Common myeloid progenitor, CD34-positive (primary cell): ENCODE measurements at regions of chr19 and their contacts with region 1.

Region 1: DNA sequence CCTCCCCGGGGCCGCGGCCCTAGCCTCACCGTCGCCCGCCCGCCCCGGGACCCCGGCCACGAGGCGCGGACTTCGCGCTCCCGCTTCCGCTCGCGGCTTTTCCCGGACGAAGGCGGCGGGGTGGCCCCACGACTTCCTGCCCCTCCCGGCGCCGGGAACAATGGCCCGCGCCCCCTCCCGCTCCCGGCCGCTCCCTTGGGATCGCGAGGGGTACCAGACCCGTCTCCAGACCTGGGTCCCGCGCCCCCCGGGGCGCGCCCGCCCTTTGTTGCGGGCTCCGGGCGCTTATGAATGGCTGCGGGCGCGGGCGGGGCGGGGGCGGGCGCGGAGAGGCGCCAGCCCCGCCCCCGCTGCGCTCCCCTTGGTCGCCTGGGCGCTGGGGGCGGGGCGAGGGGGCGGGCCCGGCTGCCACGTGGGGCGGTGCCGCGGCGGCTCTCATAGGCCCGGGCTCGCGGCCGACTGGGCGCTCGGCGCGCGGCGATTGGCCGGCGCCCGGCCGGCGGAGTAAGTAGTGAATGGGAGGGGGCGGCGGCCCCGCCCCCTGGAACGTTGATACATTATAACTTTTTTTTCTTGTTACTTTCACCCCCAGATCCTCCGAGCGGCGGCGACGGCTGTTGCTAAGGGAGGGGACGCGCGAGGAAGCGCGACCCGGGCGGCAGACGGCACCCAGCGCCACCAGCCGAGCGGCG is 1.1 kb downstream of the MIDN start:
- DNase-seq: peak; percentile 91 to 96 (median 96)
- H3K4me3 ChIP-seq: peak overlapping the region; percentile 70 to 87 (median 79)
- H3K27ac ChIP-seq: peak overlapping the region; percentile 54 to 94
- H3K4me1 ChIP-seq: peaks cover 0 to 55% (median 48%) of the 10 kb centered on the region in 4 experiments
- H3K27me3 ChIP-seq: no peaks in the 10 kb centered on the region

Region 2: GRCh38 chr19:1260636-1261537 is 11.4 kb after region 1 on chr19:
- CTCF ChIA-PET with region 1: interaction called, 268 read pairs
- POLR2A ChIA-PET with region 1: interaction called, 98 read pairs
- DNase-seq: peak; percentile 95 to 98 (median 96)
- H3K4me3 ChIP-seq: peak overlapping the region; percentile 35 to 85 (median 74)
- H3K27ac ChIP-seq: peak overlapping the region; percentile 66 to 86
- H3K4me1 ChIP-seq: peaks cover 0 to 79% (median 69%) of the 10 kb centered on the region in 4 experiments
- H3K27me3 ChIP-seq: no peaks in the 10 kb centered on the region

Region 3: GRCh38 chr19:1269065-1269477 is 19.6 kb after region 1 on chr19 and contains the start of gene CIRBP:
- CTCF ChIA-PET with region 1: interaction called, 268 read pairs
- POLR2A ChIA-PET with region 1: interaction called, 98 read pairs
- DNase-seq: peak; percentile 98 to 99 (median 99)
- H3K4me3 ChIP-seq: peak within 1 kb of the TSS; percentile 68 to 94 (median 83)
- H3K27ac ChIP-seq: peak within 1 kb of the TSS; percentile 90 to 94
- H3K4me1 ChIP-seq: peaks cover 8 to 79% (median 76%) of the 10 kb centered on the region in 4 experiments
- H3K27me3 ChIP-seq: peaks cover 0 to 6% (median 0%) of the 10 kb centered on the region in 5 experiments

Region 4: DNA sequence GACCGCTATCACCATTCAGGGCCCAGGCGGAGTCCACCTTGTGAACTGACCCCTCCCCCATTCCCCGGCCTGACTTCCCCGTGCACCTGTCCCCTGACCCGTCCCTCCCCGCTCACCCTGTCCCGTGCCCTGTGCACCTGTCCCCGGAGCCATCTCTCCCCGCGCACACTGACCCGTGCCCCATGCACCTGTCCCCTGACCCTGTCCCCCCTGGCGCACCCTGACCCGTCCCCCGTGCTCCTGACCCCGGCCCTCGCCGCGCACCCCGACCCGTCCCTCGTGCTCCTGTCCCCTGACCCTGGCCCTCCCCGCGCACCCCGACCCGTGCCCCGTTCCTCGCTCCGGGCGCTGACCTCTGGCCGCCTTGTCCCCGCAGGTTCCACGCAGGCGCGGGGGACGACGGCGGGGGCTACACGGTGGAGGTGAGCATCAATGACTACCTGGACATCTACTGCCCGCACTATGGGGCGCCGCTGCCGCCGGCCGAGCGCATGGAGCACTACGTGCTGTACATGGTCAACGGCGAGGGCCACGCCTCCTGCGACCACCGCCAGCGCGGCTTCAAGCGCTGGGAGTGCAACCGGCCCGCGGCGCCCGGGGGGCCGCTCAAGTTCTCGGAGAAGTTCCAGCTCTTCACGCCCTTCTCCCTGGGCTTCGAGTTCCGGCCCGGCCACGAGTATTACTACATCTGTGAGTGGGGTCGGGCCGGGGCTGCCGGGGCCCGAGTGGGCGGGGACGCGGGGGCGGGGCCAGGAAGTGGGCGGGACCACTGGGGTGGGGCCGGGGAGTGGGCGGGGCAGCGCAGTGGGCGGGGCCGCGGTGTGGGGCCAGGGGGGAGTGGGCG is 45.9 kb after region 1 on chr19:
- CTCF ChIA-PET with region 1: no interaction called
- POLR2A ChIA-PET with region 1: no interaction called
- DNase-seq: peak; percentile 48 to 66 (median 63)
- H3K4me3 ChIP-seq: peak overlapping the region in 2 of 7 experiments; percentile 40 to 52
- H3K27ac ChIP-seq: no peak overlapping the region
- H3K4me1 ChIP-seq: peaks cover 0 to 9% (median 7%) of the 10 kb centered on the region in 4 experiments
- H3K27me3 ChIP-seq: peaks cover 0 to 54% (median 2%) of the 10 kb centered on the region in 5 experiments

Region 5: DNA sequence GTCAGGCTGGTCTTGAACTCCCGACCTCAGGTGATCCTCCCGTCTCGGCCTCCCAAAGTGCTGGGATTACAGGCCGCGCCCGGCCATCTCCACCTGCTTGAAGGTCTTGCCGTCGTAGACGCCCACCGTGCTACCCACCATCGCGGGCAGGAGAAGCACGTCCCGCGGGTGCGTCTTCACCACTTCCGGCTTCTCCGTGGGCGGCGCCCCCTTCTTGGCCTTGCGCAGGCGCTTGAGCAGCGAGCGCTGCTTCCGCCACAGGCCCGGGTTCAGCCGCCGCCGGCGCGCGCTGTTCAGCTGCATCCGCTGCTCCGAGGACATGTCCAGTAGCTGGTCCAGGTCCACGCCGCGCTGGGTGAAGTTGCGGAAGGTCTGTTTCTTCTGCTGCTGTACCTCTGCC is 57.9 kb after region 1 on chr19:
- CTCF ChIA-PET with region 1: no interaction called
- POLR2A ChIA-PET with region 1: no interaction called
- DNase-seq: no peak
- H3K4me3 ChIP-seq: no peak overlapping the region
- H3K27ac ChIP-seq: no peak overlapping the region
- H3K4me1 ChIP-seq: no peaks in the 10 kb centered on the region
- H3K27me3 ChIP-seq: no peaks in the 10 kb centered on the region

Region 6: DNA sequence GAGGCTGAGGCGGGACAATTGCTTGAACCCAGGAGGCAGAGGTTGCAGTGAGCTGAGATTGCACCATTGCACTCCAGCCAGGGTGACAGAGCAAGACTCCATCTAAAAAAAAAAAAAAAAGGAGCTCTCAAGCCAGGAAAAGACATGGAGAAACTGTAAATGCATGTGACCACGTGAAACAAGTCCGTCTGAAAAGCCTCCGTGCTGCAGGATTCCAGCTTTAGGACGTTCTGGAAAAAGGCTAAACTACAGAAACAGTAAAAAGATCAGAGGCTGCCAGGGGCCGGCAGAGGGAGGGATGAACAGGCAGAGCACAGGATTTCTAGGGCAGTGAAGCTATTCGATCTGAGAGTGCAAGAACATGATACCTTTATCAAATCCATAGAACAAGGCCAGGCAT is 93.6 kb after region 1 on chr19:
- CTCF ChIA-PET with region 1: no interaction called
- POLR2A ChIA-PET with region 1: no interaction called
- DNase-seq: no peak
- H3K4me3 ChIP-seq: no peak overlapping the region
- H3K27ac ChIP-seq: no peak overlapping the region
- H3K4me1 ChIP-seq: peaks cover 0 to 3% (median 0%) of the 10 kb centered on the region in 4 experiments
- H3K27me3 ChIP-seq: no peaks in the 10 kb centered on the region

Region 7: GRCh38 chr19:1533510-1534150 is 284.2 kb after region 1 on chr19:
- CTCF ChIA-PET with region 1: no interaction called
- POLR2A ChIA-PET with region 1: no interaction called
- DNase-seq: no peak
- H3K4me3 ChIP-seq: no peak overlapping the region
- H3K27ac ChIP-seq: no peak overlapping the region
- H3K4me1 ChIP-seq: no peaks in the 10 kb centered on the region
- H3K27me3 ChIP-seq: peaks cover 0 to 25% (median 3%) of the 10 kb centered on the region in 5 experiments